PC-3 (cell line): ENCODE measurements at regions of chr11 and their contacts with region 1.

Region 1: DNA sequence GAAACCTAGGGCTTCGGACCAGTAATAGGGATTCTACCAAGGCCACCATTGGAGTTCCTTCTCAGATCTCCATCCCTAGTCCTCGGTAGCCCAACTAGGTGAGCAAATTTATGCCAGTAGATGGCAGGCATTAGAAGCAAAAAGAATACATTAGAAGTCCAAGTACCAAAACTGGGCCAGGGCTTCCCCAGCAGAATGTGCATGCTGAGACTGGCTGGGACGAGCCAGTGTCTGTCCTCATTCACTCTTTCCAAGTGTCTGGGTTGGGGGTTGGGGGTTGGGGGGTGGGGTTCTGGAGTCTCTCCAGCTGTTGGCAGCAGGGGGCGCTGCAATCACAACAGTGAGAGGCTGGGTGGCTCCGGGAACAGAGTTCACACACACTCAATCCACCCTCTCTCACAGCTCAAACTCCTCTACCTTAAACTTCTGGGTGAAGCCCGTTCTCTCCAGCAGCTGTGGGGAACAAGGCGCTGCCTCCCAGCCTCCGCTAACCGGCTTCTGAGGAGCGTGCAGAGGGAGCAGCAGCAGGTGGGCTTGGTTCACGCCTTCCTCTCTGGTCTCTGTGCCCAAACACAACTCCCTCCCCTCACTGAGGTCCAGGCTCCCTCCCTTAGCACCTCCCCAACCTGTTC is 57.5 kb downstream of the BTG4 start:
- DNase-seq: peak; percentile 80
- ATAC-seq: peak; percentile 90
- H3K4me3 ChIP-seq: no peak overlapping the region
- H3K27ac ChIP-seq: no peak overlapping the region
- H3K4me1 ChIP-seq: peaks cover 6% of the 10 kb centered on the region
- H3K27me3 ChIP-seq: no peaks in the 10 kb centered on the region
- CTCF ChIP-seq: peak; percentile 57

Region 2: GRCh38 chr11:111472228-111472627 is 17.6 kb after region 1 on chr11:
- CTCF ChIA-PET with region 1: no interaction called
- POLR2A ChIA-PET with region 1: no interaction called
- intact Hi-C with region 1: no loop called
- DNase-seq: peak; percentile 70
- ATAC-seq: no peak
- H3K4me3 ChIP-seq: no peak overlapping the region
- H3K27ac ChIP-seq: no peak overlapping the region
- H3K4me1 ChIP-seq: no peaks in the 10 kb centered on the region
- H3K27me3 ChIP-seq: no peaks in the 10 kb centered on the region
- CTCF ChIP-seq: no peak

Region 3: DNA sequence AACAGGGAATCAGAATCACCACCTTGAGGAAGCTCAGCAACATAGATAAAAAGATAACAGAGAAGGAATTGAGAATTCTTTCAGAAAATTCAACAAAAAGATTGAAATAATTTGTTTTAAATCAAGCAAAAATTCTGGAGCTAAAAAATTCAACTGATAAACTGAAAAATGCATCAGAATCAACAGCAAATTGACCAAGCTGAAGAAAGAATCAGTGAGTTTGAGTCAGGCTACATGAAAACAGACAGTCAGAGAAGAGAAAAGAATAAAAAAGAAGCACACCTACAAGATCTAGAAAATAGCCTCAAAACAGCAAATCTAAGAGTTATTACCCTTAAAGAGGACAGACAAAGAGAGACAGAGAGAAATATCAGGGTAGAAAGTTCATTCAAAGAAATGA is 28.8 kb after region 1 on chr11:
- CTCF ChIA-PET with region 1: no interaction called
- POLR2A ChIA-PET with region 1: no interaction called
- intact Hi-C with region 1: no loop called
- DNase-seq: no peak
- ATAC-seq: no peak
- H3K4me3 ChIP-seq: no peak overlapping the region
- H3K27ac ChIP-seq: no peak overlapping the region
- H3K4me1 ChIP-seq: no peaks in the 10 kb centered on the region
- H3K27me3 ChIP-seq: no peaks in the 10 kb centered on the region
- CTCF ChIP-seq: no peak

Region 4: DNA sequence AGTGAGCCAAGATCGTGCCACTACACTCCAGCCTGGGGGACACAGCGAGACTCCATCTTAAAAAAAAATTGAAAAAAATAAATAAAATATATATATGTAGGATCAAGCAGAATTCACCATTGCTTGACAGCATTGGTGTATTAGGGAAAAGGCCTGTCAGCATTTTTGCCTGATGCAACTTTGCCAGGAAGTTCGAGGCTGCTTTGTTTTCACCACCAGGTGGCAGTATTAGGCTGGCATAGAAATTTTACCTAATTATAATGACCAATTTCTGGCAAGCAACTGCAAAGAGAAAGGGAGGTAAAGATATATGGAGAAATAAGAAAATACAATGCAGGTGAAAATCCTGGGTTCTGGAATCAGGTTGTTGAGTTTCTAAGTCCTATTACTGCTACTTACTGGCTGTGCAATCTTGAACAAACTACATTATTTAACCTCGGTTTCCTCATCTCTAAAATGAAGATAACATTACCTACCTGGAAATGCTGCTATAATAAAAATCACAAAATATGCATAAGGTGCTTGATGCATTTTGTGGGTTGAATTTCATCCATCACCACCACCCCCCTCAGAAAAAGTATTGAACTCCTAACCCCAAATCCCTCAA is 110.5 kb after region 1 on chr11:
- CTCF ChIA-PET with region 1: interaction called, 4 read pairs
- POLR2A ChIA-PET with region 1: no interaction called
- intact Hi-C with region 1: loop called (anchors 1 kb)
- DNase-seq: peak; percentile 94
- ATAC-seq: no peak
- H3K4me3 ChIP-seq: no peak overlapping the region
- H3K27ac ChIP-seq: no peak overlapping the region
- H3K4me1 ChIP-seq: peaks cover 32% of the 10 kb centered on the region
- H3K27me3 ChIP-seq: no peaks in the 10 kb centered on the region
- CTCF ChIP-seq: peak; percentile 88

Region 5: DNA sequence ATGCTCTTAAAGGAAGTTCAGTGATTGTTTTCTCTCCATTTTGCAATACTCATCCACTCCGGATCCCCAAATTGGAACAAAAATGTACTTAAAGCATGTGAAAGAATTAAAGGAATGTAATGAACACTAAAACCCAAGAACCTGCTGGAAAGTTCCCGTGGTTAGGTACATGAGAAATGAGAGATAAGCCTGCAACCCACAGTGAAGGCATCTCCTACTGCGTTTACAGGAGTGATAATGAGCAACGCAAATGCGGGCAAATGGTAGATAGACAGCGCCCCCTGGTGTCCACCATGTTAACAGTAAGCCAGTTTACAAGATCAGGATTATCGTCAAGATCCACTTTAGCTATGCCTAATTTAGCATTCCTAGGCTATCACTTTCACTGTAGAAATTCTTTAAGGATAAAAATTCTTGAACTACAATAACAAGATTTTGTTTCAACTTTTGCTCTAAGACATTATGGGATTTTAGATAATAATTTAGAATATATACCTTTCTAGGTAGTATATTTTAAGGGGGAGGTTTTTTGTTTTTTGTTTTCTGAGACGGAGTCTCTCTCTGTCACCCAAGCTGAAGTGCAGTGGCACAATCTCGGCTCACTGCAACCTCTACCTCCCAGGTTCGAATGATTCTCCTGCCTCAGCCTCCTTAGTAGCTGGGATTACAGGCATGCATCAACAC is 386.8 kb after region 1 on chr11:
- CTCF ChIA-PET with region 1: interaction called, 3 read pairs
- POLR2A ChIA-PET with region 1: no interaction called
- intact Hi-C with region 1: loop called (anchors 1 kb)
- DNase-seq: peak; percentile 92
- ATAC-seq: peak; percentile 69
- H3K4me3 ChIP-seq: no peak overlapping the region
- H3K27ac ChIP-seq: no peak overlapping the region
- H3K4me1 ChIP-seq: peaks cover 30% of the 10 kb centered on the region
- H3K27me3 ChIP-seq: no peaks in the 10 kb centered on the region
- CTCF ChIP-seq: peak; percentile 98